Psoas muscle (tissue), 8 donors: ENCODE measurements at regions of chr7 and their contacts with region 1.

Region 1: DNA sequence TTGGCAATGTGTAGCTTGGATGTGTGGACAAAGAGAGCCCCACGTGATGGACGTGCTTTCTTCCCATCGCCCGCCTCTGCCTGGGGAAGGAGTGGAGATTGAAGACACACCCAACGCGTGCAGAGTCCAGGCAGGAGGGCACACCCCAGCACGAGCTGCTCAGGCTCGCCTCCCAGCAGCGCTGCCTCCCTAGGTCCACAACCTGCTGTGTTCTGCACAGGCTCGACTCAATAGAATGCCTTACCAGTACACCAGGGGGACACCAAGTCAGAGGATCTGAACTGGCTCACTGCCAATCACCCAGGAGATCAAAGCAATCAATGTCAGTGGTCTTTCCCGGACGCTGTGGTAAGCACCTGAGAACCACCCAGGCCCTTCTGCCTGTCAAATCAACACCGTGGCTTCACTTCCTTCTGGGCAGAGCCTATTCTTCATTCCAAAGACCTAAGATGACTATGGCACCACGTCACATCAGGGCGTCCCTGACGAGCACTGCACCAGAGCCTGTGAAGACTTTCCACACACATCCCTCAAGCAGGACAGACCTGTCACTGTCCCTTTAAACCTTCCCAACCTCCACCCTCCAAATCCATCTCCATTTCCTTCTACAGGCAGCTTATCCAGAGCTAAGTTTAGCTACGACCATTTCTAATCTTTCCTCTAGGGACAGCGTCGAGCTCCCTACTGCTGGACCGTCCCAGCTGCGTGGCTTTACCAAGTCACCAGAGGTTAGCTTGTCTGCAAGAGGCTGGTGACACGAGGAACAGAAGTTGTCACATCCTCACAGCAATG is 72.3 kb downstream of the AMZ1 start:
- DNase-seq: peak; percentile 56 to 80
- ATAC-seq: peak; percentile 82 to 87 (median 82)
- H3K4me3 ChIP-seq: peak overlapping the region; percentile 52
- H3K27ac ChIP-seq: peak overlapping the region; percentile 90
- H3K4me1 ChIP-seq: peaks cover 46% of the 10 kb centered on the region
- H3K27me3 ChIP-seq: no peaks in the 10 kb centered on the region
- CTCF ChIP-seq: peak; percentile 65

Region 2: DNA sequence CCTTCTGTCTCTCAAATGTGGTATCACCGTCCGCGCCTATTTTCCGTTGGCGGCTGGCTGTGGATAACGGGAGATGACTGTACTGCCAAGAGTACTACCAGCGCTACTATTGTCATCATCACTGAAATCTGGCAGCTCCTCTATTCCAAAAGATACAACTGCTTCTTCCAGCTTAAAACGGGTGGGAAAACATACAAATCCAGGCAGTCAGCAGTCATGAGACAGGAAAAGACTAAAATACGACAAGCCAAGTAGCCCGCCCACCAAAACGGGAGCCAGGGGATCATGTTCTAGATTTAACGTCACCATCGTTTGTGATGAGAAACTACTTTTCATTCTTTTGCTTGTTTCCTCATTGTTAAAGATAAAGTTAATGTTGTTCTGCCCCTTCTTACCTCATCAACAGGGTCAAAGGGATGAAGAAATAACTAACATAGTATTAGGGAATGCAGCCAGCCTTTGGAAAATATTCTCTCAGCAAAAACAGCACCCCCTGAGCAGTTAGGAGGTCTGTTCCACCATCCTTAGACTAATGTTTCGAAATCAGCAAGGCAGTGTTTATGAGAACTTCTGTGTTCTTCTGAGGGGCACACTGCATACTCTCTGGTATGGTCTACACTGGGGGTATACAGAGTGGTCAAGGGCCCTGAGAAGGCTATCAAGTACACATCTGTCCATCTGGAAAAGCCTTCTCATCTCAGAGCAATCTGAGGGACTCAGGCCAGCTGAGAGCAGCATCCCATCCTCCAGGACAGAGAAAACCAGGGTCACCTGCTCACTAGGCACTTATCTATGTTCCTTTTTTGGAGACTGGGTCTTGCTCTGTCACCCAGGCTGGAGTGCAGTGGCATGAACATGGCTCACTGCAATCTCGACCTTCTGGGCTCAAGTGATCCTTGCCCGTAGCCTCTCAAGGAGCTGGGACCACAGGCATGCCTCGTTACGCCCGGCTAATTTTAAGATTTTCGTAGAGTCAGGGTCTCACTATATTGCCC is 36.4 kb after region 1 on chr7:
- intact Hi-C with region 1: loop called in 1 of 2 experiments (anchors 5 kb)
- DNase-seq: peak; percentile 81 to 83
- ATAC-seq: peak; percentile 59 to 75 (median 72)
- H3K4me3 ChIP-seq: no peak overlapping the region
- H3K27ac ChIP-seq: peak overlapping the region; percentile 54
- H3K4me1 ChIP-seq: peaks cover 17% of the 10 kb centered on the region
- H3K27me3 ChIP-seq: no peaks in the 10 kb centered on the region
- CTCF ChIP-seq: no peak

Region 3: GRCh38 chr7:2811476-2812113 is 51.3 kb after region 1 on chr7:
- intact Hi-C with region 1: loop called in 1 of 2 experiments (anchors 5 kb)
- DNase-seq: peak; percentile 56 to 77
- ATAC-seq: peak; percentile 62 to 76 (median 74)
- H3K4me3 ChIP-seq: peak overlapping the region; percentile 41
- H3K27ac ChIP-seq: peak overlapping the region; percentile 61
- H3K4me1 ChIP-seq: peaks cover 10% of the 10 kb centered on the region
- H3K27me3 ChIP-seq: no peaks in the 10 kb centered on the region
- CTCF ChIP-seq: no peak

Region 4: GRCh38 chr7:2844165-2844898 is 84.0 kb after region 1 on chr7 and contains the start of gene GNA12:
- intact Hi-C with region 1: loop called in 1 of 2 experiments (anchors 5 kb)
- DNase-seq: peak; percentile 99
- ATAC-seq: peak; percentile 98 to 99 (median 99)
- H3K4me3 ChIP-seq: peak within 1 kb of the TSS; percentile 80
- H3K27ac ChIP-seq: peak within 1 kb of the TSS; percentile 80
- H3K4me1 ChIP-seq: peaks cover 22% of the 10 kb centered on the region
- H3K27me3 ChIP-seq: no peaks in the 10 kb centered on the region
- CTCF ChIP-seq: no peak
- total RNA-seq, gene GNA12: 14.6 to 20.2 (median 15.0) TPM